ENCODE measurements at regions of chr22 and their contacts with region 1.

Region 1: DNA sequence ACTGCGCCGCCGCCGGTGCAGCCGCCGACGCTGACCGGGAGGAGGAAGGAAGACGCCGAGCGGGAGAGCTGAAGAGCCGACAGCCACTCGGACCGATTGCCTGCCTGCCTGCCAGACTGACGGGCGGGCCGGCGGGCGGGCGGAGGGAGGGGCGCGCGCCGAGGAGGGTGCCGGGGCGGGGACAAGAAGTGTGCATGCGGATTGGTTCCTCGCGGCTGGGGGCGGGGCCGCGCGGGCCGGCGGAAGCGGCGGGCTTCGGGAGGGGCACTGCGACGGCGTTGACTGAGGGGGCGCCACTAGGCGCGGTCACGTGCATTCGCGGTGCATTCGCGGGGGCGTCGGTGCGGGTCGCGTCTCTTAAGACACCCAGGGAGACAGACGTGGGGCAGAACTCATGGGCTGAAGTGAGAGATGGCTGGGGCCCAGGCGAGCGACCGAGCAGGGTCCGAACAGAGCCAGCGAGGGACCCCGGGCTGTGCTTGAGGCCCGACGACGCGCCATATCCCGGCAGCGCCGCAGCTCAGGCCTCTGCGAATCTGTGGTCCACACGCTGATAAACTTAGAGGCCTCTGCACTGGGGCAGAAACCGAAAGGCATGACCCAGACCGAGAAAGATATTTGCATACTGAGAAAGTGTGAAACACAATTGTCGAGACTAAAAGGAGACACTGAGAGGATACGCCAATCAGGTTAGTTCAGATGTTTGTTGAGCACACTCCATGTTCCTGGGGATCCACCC is at the start of gene MAPK1:
- DNase-seq: peak; percentile 40
- H3K4me3 ChIP-seq: peak within 1 kb of the TSS; percentile 86 to 88 (median 88)
- H3K27ac ChIP-seq: peak within 1 kb of the TSS; percentile 94 to 97 (median 96)
- H3K4me1 ChIP-seq: peaks cover 10 to 54% (median 23%) of the 10 kb centered on the region in 3 donors
- H3K27me3 ChIP-seq: no peaks in the 10 kb centered on the region
- CTCF ChIP-seq: peak in 5 of 6 experiments; percentile 4 to 40 (median 28)
- POLR2A ChIP-seq: peak in 2 of 4 donors; percentile 78 to 83
- total RNA-seq, gene MAPK1: 36.0 to 57.6 (median 45.0) TPM

Region 2: DNA sequence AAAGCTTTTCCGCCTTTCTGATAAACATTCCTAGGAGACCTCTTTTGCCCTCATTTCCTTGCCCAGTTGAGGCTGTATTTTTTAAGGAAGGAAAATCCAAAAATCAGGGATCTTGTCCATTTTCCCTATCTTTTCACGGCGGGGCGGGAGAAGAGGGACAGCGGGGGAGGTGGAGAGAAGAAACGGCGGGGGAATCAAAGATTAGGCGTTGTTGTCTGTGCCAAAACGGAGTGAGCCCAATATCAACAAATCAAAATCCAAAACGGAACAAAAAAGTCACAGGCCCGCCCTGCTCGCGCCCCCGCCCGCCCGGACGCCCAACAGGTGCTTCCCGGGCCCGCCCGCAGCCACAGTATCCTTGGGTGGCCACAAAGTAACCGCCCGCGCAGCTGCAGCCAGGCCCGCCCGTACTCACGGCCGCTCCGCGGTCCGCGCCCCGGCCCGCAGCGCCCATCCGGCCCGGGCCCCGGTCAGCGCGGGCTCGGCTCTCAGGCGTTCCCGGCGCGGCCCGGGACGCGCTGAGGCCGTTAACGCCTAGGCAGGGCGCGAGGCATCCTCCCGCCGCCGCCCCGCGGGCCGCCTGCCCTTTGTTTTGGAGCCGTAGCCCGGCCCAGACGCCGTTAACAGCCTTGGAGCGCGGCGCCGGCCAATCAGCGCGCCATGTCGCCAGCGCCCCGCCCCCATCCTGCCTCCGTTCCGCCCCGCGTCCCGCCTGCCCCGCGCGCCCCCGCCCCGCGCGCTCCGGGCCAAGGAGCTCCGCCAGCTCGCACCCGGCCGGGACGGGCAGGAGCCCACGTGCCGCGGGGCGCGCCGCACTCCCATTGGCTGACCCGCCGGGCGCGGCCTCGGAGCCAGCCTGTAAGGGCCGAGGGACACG is 132.3 kb before region 1 on chr22 and contains the start of gene YPEL1:
- intact Hi-C with region 1: loop called (anchors 10 kb)
- DNase-seq: peak; percentile 71
- H3K4me3 ChIP-seq: peak within 1 kb of the TSS; percentile 32 to 89 (median 61)
- H3K27ac ChIP-seq: peak within 1 kb of the TSS; percentile 40 to 92 (median 82)
- H3K4me1 ChIP-seq: peaks cover 6 to 20% (median 9%) of the 10 kb centered on the region in 3 donors
- H3K27me3 ChIP-seq: no peaks in the 10 kb centered on the region
- CTCF ChIP-seq: peak in 2 of 6 experiments; percentile 4 to 16
- POLR2A ChIP-seq: peak in 3 of 4 donors; percentile 94 to 98 (median 97)
- total RNA-seq, gene YPEL1: 0.53 to 8.5 (median 3.0) TPM